ENCODE measurements at regions of chr12 and their contacts with region 1.

Region 1: DNA sequence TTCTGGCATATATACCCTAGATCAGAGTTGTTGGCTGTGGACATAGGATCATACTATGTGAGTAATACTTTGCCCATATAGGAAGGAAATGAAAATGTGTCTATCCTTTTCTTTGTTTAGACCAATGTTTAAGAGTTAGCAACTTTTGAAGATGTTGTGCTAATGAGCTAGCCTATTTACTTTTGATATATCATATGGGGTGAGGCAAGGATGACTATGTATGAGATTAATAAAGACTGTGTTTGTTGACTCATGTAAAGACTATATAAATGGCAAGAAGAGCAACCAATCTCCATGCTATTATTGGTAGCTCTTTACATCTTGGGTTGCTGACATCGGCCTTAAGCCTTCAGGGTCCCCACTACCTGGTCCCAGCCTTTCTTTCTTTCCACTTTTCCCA is 289.4 kb downstream of the CCDC91 start:
- DNase-seq: no peak
- ATAC-seq: no peak
- H3K4me3 ChIP-seq: no peak overlapping the region
- H3K27ac ChIP-seq: no peak overlapping the region
- H3K4me1 ChIP-seq: peaks cover 0 to 2% (median 0%) of the 10 kb centered on the region in 12 donors
- H3K27me3 ChIP-seq: no peaks in the 10 kb centered on the region
- CTCF ChIP-seq: no peak
- POLR2A ChIP-seq: no peak

Region 2: DNA sequence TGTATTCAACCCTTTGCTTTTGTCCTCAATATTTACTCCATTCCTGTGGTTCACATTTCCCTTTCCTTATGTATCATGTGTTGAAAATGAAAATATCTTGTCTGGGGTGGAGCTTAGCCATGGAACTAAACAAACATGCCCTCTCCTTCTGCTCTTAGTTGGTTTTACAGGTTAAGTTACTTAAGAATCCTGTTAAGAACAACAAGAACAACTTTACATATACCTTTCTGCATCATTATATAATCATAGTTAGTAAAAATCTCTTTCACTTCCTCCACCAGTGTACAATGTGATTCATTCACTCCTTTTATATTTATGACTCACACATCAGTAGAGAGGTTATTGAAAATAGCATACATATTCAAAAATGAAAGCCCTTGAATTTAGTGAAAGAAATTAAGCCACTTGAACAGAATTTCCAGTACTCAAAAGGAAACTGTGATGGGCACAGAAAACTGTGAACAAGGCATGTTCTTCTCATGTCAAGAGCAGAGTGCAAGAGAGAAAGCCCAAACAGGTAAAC is 18.3 kb after region 1 on chr12:
- intact Hi-C with region 1: no loop called
- DNase-seq: no peak
- ATAC-seq: no peak
- H3K4me3 ChIP-seq: no peak overlapping the region
- H3K27ac ChIP-seq: no peak overlapping the region
- H3K4me1 ChIP-seq: no peaks in the 10 kb centered on the region
- H3K27me3 ChIP-seq: no peaks in the 10 kb centered on the region
- CTCF ChIP-seq: no peak
- POLR2A ChIP-seq: no peak

Region 3: DNA sequence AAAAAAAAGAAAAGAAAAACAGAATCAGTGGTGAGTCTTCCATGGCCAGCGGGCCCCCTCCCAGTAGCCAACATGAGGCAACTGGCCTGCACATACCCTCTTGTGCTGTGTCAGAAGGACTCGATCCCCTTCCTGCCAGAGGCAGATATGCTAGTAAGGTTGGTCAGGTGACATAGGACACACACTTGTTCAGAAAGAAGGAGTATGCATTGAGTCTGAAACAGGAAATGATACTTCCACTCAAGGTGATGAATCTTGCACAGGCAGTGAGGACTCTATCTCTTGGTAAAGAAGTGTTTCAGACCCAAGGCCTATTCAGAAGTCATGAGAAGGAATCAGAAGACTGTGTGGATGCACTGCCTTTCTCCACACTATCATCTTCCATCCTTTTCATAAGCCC is 399.7 kb after region 1 on chr12:
- intact Hi-C with region 1: loop called in 1 of 10 experiments (anchors 10 kb)
- DNase-seq: no peak
- ATAC-seq: no peak
- H3K4me3 ChIP-seq: no peak overlapping the region
- H3K27ac ChIP-seq: no peak overlapping the region
- H3K4me1 ChIP-seq: no peaks in the 10 kb centered on the region
- H3K27me3 ChIP-seq: peaks cover 0 to 5% (median 0%) of the 10 kb centered on the region in 9 donors
- CTCF ChIP-seq: no peak
- POLR2A ChIP-seq: no peak

Region 4: DNA sequence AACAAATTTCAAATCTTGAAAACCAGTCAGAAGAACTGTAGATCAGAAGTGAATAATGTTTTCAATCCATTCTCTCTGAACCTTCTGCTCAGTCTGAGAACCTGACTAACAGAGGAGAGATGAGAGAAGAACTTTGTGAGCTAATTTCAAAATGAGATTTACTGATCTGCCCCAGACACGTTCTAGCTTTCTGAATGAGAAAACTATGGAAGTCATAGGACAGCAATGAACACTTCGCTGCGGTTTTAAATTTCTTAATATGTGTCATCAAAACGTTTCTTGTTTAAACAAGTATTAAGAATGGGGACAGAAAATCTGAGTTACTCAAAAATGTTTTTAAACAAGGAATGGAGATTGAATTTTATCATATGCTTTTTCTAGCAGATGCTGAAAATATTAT is 602.8 kb after region 1 on chr12:
- intact Hi-C with region 1: no loop called
- DNase-seq: no peak
- ATAC-seq: no peak
- H3K4me3 ChIP-seq: no peak overlapping the region
- H3K27ac ChIP-seq: no peak overlapping the region
- H3K4me1 ChIP-seq: no peaks in the 10 kb centered on the region
- H3K27me3 ChIP-seq: no peaks in the 10 kb centered on the region
- CTCF ChIP-seq: no peak
- POLR2A ChIP-seq: no peak